ENCODE measurements at regions of chr3 and their contacts with region 1.

Region 1: GRCh38 chr3:72847751-72848702 is at the start of gene SHQ1:
- DNase-seq: peak; percentile 83 to 96 (median 87)
- ATAC-seq: peak; percentile 96
- H3K4me3 ChIP-seq: peak within 1 kb of the TSS; percentile 76
- H3K27ac ChIP-seq: peak within 1 kb of the TSS; percentile 72
- H3K4me1 ChIP-seq: peaks cover 6 to 16% of the 10 kb centered on the region in 2 experiments; a peak in 4 of 5 replicates
- H3K27me3 ChIP-seq: no peaks in the 10 kb centered on the region
- CTCF ChIP-seq: no peak
- EP300 ChIP-seq: no peak
- POLR2A ChIP-seq: peak; percentile 73
- RAD21 ChIP-seq: no peak
- polyA plus RNA-seq, gene SHQ1: 9.2 to 9.8 TPM

Region 2: GRCh38 chr3:72887705-72888545 is 39.9 kb after region 1 on chr3 and contains the start of gene GXYLT2:
- CTCF ChIA-PET with region 1: interaction called, 3 read pairs
- POLR2A ChIA-PET with region 1: no interaction called
- in situ Hi-C with region 1: no loop called
- intact Hi-C with region 1: loop called (anchors 5 kb)
- DNase-seq: peak; percentile 62 to 76 (median 64)
- ATAC-seq: peak; percentile 85
- H3K4me3 ChIP-seq: peak within 1 kb of the TSS; percentile 48
- H3K27ac ChIP-seq: peak within 1 kb of the TSS; percentile 52; the same call in 2 of the 3 replicates
- H3K4me1 ChIP-seq: peaks cover 4 to 25% of the 10 kb centered on the region in 2 experiments; a peak in 3 of 5 replicates
- H3K27me3 ChIP-seq: no peaks in the 10 kb centered on the region
- CTCF ChIP-seq: peak in 2 of 3 experiments; percentile 29 to 34; a peak in 2 of 6 replicates
- EP300 ChIP-seq: no peak
- POLR2A ChIP-seq: no peak
- RAD21 ChIP-seq: peak in 1 of 2 experiments; percentile 14; a peak in 1 of 4 replicates
- polyA plus RNA-seq, gene GXYLT2: 0.71 to 1.4 TPM

Region 3: GRCh38 chr3:72907731-72908620 is 59.9 kb after region 1 on chr3:
- CTCF ChIA-PET with region 1: no interaction called
- POLR2A ChIA-PET with region 1: no interaction called
- in situ Hi-C with region 1: no loop called
- intact Hi-C with region 1: no loop called
- DNase-seq: no peak
- ATAC-seq: no peak
- H3K4me3 ChIP-seq: no peak overlapping the region
- H3K27ac ChIP-seq: no peak overlapping the region
- H3K4me1 ChIP-seq: no peaks in the 10 kb centered on the region; a peak in 2 of 5 replicates
- H3K27me3 ChIP-seq: no peaks in the 10 kb centered on the region
- CTCF ChIP-seq: no peak
- EP300 ChIP-seq: no peak
- POLR2A ChIP-seq: no peak
- RAD21 ChIP-seq: no peak

Region 4: GRCh38 chr3:73070675-73071575 is 222.9 kb after region 1 on chr3:
- CTCF ChIA-PET with region 1: no interaction called
- POLR2A ChIA-PET with region 1: interaction called, 3 read pairs
- in situ Hi-C with region 1: no loop called
- intact Hi-C with region 1: loop called (anchors 10 kb)
- DNase-seq: no peak
- ATAC-seq: peak; percentile 31; the same call in 2 of the 3 replicates
- H3K4me3 ChIP-seq: no peak overlapping the region
- H3K27ac ChIP-seq: no peak overlapping the region
- H3K4me1 ChIP-seq: peaks cover 4 to 12% of the 10 kb centered on the region in 2 experiments; a peak in 4 of 5 replicates
- H3K27me3 ChIP-seq: no peaks in the 10 kb centered on the region
- CTCF ChIP-seq: no peak
- EP300 ChIP-seq: no peak
- POLR2A ChIP-seq: peak; percentile 22; the same call in 1 of the 2 replicates
- RAD21 ChIP-seq: no peak